Posterior vena cava (tissue), 2 donors: ENCODE measurements at regions of chr1 and their contacts with region 1.

Region 1: GRCh38 chr1:96901783-96902363 is 180.3 kb downstream of the PTBP2 start:
- DNase-seq: no peak

Region 2: GRCh38 chr1:96365596-96366390 is 536.1 kb before region 1 on chr1:
- intact Hi-C with region 1: loop called in 1 of 2 experiments (anchors 5 kb)
- DNase-seq: no peak

Region 3: DNA sequence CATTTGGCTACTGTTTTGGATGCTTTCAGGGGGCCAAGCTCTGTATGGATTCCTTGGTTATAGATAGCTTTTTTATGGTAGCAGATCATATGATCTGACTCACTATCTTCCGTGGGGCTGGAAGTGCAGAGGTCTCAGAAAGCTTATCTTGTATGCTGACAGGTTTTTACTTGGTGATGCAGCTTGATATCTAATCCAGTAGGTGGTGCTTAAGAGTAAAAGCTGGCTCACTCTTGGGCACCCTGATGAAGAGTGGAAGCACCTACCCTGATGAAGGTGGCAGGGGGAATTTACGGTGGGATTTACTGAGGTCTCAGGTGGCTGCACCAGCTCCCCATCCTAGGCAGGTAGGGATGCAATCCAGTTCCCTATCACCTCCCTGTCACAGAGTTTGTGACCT is 29.1 kb before region 1 on chr1:
- intact Hi-C with region 1: no loop called
- DNase-seq: no peak